ENCODE measurements at regions of chr14 and their contacts with region 1.

Region 1: DNA sequence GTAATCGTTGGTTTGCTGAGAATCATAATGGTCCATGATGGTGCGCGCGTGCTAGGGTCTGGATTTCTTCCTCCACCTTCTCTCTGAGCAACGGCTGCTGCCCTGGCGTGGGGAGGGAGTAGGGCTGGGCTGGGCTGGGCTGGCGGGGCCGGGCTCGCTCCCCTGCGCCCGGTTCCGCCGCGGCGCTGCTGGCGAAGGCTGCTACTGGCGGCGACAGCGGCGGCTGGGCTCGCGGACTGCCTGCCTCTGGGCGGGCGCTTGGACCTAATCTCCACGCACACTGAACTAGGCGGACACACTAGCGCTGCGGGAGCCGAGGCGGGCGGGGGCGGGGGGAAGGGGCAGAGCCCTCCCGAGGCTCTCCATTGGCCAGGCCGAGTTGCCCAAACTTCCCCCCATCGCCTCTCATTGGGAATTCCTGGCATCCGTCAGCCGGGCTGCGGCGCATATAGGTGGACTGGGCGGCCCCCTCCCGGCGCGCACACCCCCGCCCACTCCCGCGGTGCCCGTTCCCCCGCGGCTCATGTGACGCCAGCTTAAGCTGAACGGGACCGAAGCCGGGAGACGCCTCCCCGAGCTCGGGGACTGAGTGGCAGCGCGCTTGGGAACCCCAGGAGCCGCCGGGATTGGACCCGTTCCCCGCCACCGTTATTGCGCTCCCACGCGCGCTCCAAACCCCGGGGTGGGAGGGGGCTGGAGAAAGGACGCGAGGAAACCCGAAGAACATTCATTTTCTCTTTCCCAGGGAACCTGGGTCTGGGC is at the start of gene ACTN1:
- DNase-seq: peak; percentile 95 to 97
- H3K4me3 ChIP-seq: peak within 1 kb of the TSS; percentile 88 to 94
- H3K27ac ChIP-seq: peak within 1 kb of the TSS; percentile 97 to 100
- H3K4me1 ChIP-seq: peaks cover 7 to 13% of the 10 kb centered on the region in 2 donors
- H3K27me3 ChIP-seq: no peaks in the 10 kb centered on the region
- CTCF ChIP-seq: peak in 1 of 4 experiments; percentile 29
- POLR2A ChIP-seq: peak; percentile 87 to 91
- total RNA-seq, gene ACTN1: 147 to 538 (median 343) TPM

Region 2: GRCh38 chr14:68939893-68940613 is 39.1 kb before region 1 on chr14:
- intact Hi-C with region 1: loop called (anchors 5 kb)
- DNase-seq: peak; percentile 77 to 80
- H3K4me3 ChIP-seq: no peak overlapping the region
- H3K27ac ChIP-seq: peak overlapping the region; percentile 93 to 95
- H3K4me1 ChIP-seq: peaks cover 21 to 27% of the 10 kb centered on the region in 2 donors
- H3K27me3 ChIP-seq: no peaks in the 10 kb centered on the region
- CTCF ChIP-seq: no peak
- POLR2A ChIP-seq: peak in 1 of 2 donors; percentile 26